Endothelial cell of umbilical vein (primary cell): ENCODE measurements at regions of chr9 and their contacts with region 1.

Region 1: DNA sequence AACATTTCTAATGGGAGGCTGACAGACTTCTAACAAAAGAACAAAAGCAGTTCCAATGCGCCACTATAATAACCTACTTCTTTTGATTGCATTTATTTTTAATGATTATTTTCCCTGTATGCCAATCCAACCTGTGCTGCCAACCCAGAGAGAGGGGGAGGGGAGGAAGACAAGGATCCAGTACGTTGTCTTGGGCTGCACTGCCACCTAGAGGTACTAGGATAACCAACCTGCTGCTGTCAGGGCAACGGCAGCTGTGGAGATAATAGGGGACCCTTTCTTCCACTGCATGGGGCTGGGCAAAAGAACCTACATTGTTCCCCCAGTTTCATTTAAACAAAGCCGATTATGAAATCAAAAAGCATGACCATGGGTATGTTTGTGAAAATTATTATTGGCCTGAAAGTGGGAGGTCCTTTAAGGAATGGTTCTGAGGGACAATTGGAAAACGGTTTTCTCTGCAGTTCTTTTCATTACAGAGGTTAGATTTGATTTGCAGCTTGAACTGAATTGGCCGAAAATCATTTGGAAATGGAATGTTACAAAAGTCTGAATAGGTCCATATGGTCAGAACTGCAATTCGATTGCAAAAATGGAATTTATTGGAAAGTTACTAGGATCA is 101.3 kb downstream of the RASEF start:
- DNase-seq: peak; percentile 74
- H3K4me3 ChIP-seq: no peak overlapping the region
- H3K27ac ChIP-seq: no peak overlapping the region
- H3K4me1 ChIP-seq: no peaks in the 10 kb centered on the region
- H3K27me3 ChIP-seq: peaks cover 0 to 4% of the 10 kb centered on the region in 2 experiments
- CTCF ChIP-seq: peak; percentile 75 to 81
- POLR2A ChIP-seq: no peak

Region 2: GRCh38 chr9:81529556-81530195 is 1431.9 kb before region 1 on chr9:
- CTCF ChIA-PET with region 1: no interaction called
- POLR2A ChIA-PET with region 1: no interaction called
- dilution Hi-C with region 1: no loop called
- intact Hi-C with region 1: loop called (anchors 10 kb)
- DNase-seq: peak; percentile 89
- H3K4me3 ChIP-seq: no peak overlapping the region
- H3K27ac ChIP-seq: peak overlapping the region; percentile 15
- H3K4me1 ChIP-seq: peaks cover 10% of the 10 kb centered on the region
- H3K27me3 ChIP-seq: no peaks in the 10 kb centered on the region
- CTCF ChIP-seq: no peak
- POLR2A ChIP-seq: no peak

Region 3: GRCh38 chr9:82410305-82410704 is 551.3 kb before region 1 on chr9:
- CTCF ChIA-PET with region 1: no interaction called
- POLR2A ChIA-PET with region 1: no interaction called
- dilution Hi-C with region 1: no loop called
- intact Hi-C with region 1: no loop called
- DNase-seq: no peak
- H3K4me3 ChIP-seq: no peak overlapping the region
- H3K27ac ChIP-seq: no peak overlapping the region
- H3K4me1 ChIP-seq: no peaks in the 10 kb centered on the region
- H3K27me3 ChIP-seq: no peaks in the 10 kb centered on the region
- CTCF ChIP-seq: no peak
- POLR2A ChIP-seq: no peak

Region 4: GRCh38 chr9:82532504-82533180 is 429.0 kb before region 1 on chr9:
- CTCF ChIA-PET with region 1: no interaction called
- POLR2A ChIA-PET with region 1: no interaction called
- dilution Hi-C with region 1: no loop called
- intact Hi-C with region 1: loop called (anchors 1 kb)
- DNase-seq: no peak
- H3K4me3 ChIP-seq: no peak overlapping the region
- H3K27ac ChIP-seq: no peak overlapping the region
- H3K4me1 ChIP-seq: no peaks in the 10 kb centered on the region
- H3K27me3 ChIP-seq: no peaks in the 10 kb centered on the region
- CTCF ChIP-seq: no peak
- POLR2A ChIP-seq: no peak

Region 5: DNA sequence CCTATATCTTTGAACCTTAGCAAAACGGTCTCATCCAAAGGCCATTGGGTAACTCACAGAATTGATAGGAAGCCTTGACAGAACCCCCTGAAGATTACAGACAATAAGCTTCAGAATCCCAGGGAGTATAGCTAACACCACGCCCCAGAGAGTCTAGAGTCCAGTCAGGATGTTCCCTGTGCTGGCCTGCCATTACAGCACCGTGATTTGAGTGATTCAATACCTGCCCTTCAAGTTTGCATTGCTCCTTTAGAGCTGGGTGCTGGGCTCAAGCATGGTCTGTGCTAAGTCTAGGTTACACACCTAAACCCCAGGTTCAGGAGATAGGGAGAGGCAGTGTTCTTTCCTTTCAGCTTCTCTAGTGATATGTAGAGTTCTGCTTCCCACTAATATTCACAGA is 10.8 kb after region 1 on chr9:
- CTCF ChIA-PET with region 1: no interaction called
- POLR2A ChIA-PET with region 1: no interaction called
- dilution Hi-C with region 1: no loop called
- intact Hi-C with region 1: no loop called
- DNase-seq: no peak
- H3K4me3 ChIP-seq: no peak overlapping the region
- H3K27ac ChIP-seq: no peak overlapping the region
- H3K4me1 ChIP-seq: no peaks in the 10 kb centered on the region
- H3K27me3 ChIP-seq: no peaks in the 10 kb centered on the region
- CTCF ChIP-seq: no peak
- POLR2A ChIP-seq: no peak

Region 6: DNA sequence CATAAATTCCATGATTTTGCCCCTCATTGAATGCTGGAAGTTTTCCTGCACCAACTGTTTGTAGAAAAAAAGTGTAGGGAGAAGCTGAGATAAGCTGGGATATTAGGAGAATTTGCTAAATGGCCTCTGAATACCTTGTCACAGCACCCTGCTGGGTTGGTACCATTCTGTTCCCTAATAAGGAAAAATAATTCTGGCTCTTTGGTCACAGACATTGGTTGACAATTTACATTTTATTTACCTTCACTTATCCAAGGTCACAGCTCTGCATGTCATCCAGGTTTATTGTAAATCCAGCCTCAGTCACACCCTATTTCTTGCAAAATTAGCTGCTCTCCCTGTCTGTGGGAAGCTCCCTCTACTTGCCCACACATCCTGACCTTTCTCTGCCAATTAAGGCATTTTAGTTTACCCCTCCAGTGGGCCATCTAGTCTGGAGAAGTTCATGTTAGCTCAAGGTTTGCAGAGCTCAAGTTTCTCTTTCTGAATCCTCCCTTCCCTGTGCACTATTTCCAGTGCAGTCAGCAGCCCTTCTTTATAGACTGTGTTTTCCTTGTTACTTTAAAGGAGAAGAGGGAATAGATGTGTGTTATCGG is 1592.6 kb after region 1 on chr9:
- CTCF ChIA-PET with region 1: no interaction called
- POLR2A ChIA-PET with region 1: no interaction called
- dilution Hi-C with region 1: no loop called
- intact Hi-C with region 1: no loop called
- DNase-seq: no peak
- H3K4me3 ChIP-seq: no peak overlapping the region
- H3K27ac ChIP-seq: no peak overlapping the region
- H3K4me1 ChIP-seq: no peaks in the 10 kb centered on the region
- H3K27me3 ChIP-seq: no peaks in the 10 kb centered on the region
- CTCF ChIP-seq: no peak
- POLR2A ChIP-seq: no peak